Lower leg skin (tissue), 4 donors: ENCODE measurements at regions of chr5 and their contacts with region 1.

Region 1: DNA sequence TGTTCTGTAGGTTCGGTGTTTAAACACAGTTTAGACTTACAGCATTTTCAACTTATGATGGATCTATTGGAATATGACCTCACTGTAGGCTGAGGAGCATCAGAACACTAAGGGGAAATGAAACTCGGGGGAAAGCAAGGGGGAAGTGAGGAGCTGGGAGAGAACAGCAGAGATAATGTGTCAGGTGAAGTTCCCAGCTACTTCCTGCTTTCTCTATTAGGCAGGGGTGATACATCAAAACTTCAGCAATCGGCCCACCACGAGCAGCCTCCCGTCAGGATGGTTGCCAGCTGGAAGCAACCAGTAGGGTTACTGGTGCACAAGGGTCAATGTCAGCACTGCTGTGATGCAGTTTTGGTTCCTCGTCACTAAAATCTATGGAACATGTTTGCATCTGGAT is 34.3 kb downstream of the FAT2 start:
- DNase-seq: no peak
- H3K4me3 ChIP-seq: no peak overlapping the region
- CTCF ChIP-seq: no peak
- POLR2A ChIP-seq: no peak

Region 2: DNA sequence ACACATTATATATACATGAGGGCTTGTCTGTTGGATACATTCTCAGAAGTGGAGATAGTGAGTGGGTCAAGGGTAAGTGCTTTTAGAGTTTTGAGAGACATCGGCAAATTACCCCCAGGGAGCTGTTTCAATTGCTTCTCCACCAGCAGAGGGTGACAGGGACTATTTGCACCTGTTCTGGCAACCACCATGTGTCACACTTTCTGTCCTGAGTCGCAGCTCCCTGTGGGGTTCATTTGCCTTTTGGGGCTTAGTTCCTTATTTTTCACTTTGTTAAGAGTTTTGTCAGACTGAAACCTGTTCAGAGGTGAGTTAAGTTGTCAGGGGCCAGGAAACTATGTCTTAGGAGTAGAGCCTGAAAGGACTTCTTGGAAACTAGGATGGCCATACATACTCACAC is 129.5 kb before region 1 on chr5:
- intact Hi-C with region 1: no loop called
- DNase-seq: no peak
- H3K4me3 ChIP-seq: no peak overlapping the region
- CTCF ChIP-seq: no peak
- POLR2A ChIP-seq: no peak

Region 3: GRCh38 chr5:151651997-151652645 is 95.3 kb after region 1 on chr5:
- intact Hi-C with region 1: loop called (anchors 10 kb)
- DNase-seq: peak; percentile 83 to 94
- H3K4me3 ChIP-seq: no peak overlapping the region
- CTCF ChIP-seq: peak in 2 of 3 donors; percentile 30 to 75
- POLR2A ChIP-seq: no peak